ENCODE measurements at regions of chr19 and their contacts with region 1.

Region 1: GRCh38 chr19:13195678-13196077 is 45.5 kb downstream of the IER2 start:
- DNase-seq: peak; percentile 74
- ATAC-seq: no peak
- H3K4me3 Mint-ChIP-seq: no peak overlapping the region
- H3K27ac Mint-ChIP-seq: no peak overlapping the region
- H3K4me1 Mint-ChIP-seq: peaks cover 34% of the 10 kb centered on the region
- H3K27me3 Mint-ChIP-seq: no peaks in the 10 kb centered on the region

Region 2: GRCh38 chr19:13155472-13156359 is 40.0 kb before region 1 on chr19:
- CTCF ChIA-PET with region 1: interaction called, 7 read pairs
- POLR2A ChIA-PET with region 1: no interaction called
- intact Hi-C with region 1: loop called (anchors 2 to 5 kb)
- DNase-seq: peak; percentile 82
- ATAC-seq: peak; percentile 1
- H3K4me3 Mint-ChIP-seq: peak overlapping the region; percentile 87
- H3K27ac Mint-ChIP-seq: peak overlapping the region; percentile 100
- H3K4me1 Mint-ChIP-seq: peaks cover 33% of the 10 kb centered on the region
- H3K27me3 Mint-ChIP-seq: no peaks in the 10 kb centered on the region

Region 3: DNA sequence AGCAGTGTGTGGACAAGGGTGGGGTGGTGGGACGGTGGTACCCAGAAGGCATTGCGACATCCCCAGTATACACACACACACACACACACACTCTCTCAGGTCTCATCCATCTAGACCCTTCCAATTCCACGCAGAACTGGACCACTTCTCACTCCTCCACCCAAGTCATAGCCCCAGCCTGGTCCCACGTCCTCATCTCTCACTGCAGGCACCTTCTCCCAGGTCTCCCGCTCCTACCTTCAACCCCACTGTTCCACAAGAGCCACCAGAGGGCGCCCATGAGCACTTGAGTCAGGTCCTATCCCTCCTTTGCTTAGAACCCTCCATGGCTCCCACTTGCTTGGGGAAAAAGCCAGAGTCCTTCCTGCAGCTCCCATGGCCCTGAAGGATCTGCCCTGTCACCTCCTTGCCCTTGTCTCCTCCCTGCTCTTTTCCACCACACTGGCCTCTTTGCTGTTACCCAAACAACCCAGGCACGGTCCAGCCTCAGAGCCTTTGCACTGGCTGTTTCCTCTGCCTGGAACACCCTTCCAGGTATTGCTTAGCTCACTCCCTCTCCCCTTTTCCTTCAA is 17.2 kb after region 1 on chr19:
- CTCF ChIA-PET with region 1: interaction called, 13 read pairs
- POLR2A ChIA-PET with region 1: interaction called, 4 read pairs
- intact Hi-C with region 1: no loop called
- DNase-seq: peak; percentile 90
- ATAC-seq: peak; percentile 51
- H3K4me3 Mint-ChIP-seq: no peak overlapping the region
- H3K27ac Mint-ChIP-seq: no peak overlapping the region
- H3K4me1 Mint-ChIP-seq: peaks cover 32% of the 10 kb centered on the region
- H3K27me3 Mint-ChIP-seq: no peaks in the 10 kb centered on the region

Region 4: DNA sequence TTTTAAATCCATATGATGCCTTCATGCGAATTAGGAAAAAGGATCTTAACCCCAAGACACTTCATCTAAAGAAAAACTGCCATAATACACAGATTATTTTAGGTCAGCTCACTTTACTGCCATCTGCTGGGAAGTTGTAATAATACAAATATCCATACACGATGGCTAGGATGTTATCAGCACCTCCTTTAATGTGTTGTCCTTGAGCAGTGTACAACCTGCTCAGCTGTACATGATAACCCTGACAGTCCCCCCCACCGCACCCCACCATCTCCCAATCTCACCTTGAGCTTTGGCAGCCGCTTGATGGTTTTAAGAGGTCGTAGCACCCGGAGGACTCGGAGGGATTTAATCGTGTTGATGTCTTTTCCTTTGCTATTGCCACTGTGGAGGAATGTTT is 66.8 kb after region 1 on chr19:
- CTCF ChIA-PET with region 1: interaction called, 22 read pairs
- POLR2A ChIA-PET with region 1: no interaction called
- intact Hi-C with region 1: loop called (anchors 1 kb)
- DNase-seq: no peak
- ATAC-seq: peak; percentile 40
- H3K4me3 Mint-ChIP-seq: no peak overlapping the region
- H3K27ac Mint-ChIP-seq: no peak overlapping the region
- H3K4me1 Mint-ChIP-seq: peaks cover 14% of the 10 kb centered on the region
- H3K27me3 Mint-ChIP-seq: peaks cover 17% of the 10 kb centered on the region

Region 5: DNA sequence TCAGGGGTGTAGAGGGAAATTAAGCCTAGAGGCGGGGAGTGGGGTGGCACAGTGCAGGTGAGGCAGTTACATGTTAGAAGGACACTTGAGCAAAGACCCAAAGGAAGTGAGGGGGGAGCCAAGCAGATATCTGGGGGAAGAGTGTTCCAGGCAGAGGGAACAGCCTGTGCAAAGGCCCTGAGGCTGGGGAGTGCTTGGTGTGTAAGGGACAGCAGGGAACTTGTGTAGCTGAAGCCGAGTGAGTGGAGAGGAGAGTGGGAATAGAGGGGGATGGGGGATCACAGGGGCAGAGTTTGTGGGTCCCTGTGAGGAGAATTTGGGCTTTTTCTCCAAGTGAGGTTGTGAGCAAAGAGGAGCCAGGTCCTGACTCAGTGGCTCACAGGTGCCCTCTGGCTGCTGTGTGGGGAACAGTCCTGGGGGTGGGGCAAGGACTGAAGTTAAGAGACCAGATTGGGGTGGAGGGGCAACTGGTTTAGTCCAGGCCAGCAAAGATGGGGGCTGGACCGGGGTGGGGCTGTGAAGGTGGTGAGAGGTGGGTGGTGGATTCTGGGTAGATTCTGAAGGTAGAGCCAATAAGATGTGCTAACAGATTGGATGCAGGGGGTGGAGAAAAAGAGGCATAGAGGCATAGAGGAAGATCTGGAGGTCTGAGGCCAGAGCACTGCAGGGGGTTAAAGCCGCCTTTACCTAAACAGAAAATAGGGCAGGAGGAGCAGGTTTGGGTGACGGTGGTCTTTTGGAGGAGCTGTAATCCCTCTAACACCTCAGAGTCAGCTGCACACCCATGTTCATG is 235.3 kb after region 1 on chr19:
- CTCF ChIA-PET with region 1: interaction called, 6 read pairs
- POLR2A ChIA-PET with region 1: no interaction called
- intact Hi-C with region 1: loop called in 1 of 2 experiments (anchors 1 kb)
- DNase-seq: peak; percentile 76
- ATAC-seq: peak; percentile 71
- H3K4me3 Mint-ChIP-seq: no peak overlapping the region
- H3K27ac Mint-ChIP-seq: no peak overlapping the region
- H3K4me1 Mint-ChIP-seq: no peaks in the 10 kb centered on the region
- H3K27me3 Mint-ChIP-seq: peaks cover 10% of the 10 kb centered on the region

Measured in activated CD4-positive, alpha-beta T cell treated with anti-CD3 and anti-CD28 coated beads for 36 hours (primary cell).